Activated CD4-positive, alpha-beta T cell treated with anti-CD3 and anti-CD28 coated beads, Interleukin-2, amount 10 ng/mL, durations not matched to agents 24 days and 14 days (primary cell): ENCODE measurements at regions of chr2 and their contacts with region 1.

Region 1: DNA sequence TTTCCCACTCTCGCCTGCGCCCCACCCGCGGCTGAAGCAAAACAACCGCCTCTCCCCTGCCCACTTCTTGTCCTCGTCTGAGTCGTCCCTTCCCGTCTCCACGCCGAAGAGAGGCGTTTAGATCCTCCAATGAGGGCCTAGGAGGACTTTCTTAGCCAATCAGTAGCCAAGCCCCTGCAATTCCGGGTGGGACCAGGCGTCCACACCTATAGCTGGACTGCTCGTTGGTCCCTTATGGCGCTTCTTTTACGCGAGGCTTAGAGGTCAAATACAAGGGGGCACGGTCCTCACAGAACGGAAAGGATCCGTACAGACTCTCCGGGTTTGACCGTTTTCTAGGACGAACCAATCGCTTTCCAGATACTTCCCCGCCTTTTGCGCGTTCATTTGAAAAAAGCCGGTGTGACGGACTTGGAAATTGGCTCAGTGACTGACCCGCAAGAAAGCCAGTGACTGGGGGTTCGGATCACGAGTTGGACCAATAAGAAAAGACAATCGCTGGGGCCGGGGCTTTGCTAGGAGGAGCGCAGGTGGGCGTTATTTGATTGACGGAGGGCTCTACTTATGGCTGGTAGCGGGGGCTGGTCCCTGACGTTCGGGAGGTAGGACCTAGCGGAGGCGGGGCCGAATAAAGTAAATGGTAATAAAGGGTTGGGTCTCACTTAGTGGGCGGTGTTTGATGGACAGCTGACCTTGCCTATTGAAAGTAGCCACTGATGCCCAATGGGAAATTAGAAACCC is 565 bp upstream of the PPM1B start:
- DNase-seq: peak; percentile 98
- H3K4me3 Mint-ChIP-seq: peak overlapping the region; percentile 94
- H3K27ac Mint-ChIP-seq: peak overlapping the region; percentile 99
- H3K4me1 Mint-ChIP-seq: peaks cover 27% of the 10 kb centered on the region
- H3K27me3 Mint-ChIP-seq: no peaks in the 10 kb centered on the region

Region 2: DNA sequence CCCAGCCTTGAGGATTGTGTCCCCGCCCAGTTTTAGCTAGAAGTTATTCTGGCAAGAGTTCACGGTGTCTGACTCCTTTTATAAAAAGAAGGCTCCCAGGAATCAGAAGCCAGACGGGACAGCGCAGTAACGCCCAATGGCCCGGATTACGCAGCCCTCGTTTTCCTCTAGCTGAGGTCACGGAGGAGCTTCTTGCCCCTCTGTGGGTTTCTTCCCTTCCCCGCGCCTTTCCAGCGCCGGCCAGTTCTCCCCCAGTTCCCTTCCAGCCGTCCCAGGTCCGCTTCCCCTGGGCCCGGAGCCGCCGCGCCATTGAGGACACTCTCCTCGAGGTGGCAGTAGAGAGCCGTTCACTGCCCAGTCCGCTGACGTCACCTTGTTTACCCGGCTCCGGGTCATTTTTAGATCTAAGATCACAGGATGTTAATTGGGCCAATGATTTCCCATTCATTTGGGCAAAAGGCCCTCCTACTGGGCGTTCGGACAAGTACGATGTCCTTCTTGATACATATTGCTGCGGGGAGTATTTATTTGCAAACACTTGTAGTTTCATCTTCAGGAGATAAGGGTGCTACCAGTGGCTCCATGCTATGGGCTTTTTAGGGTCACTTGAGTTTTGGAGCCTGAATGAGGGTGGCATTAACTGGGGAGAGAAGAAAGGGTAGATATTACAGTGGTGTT is 80.9 kb before region 1 on chr2:
- intact Hi-C with region 1: loop called (anchors 1 kb)
- DNase-seq: peak; percentile 96
- H3K4me3 Mint-ChIP-seq: peak overlapping the region; percentile 72
- H3K27ac Mint-ChIP-seq: peak overlapping the region; percentile 83
- H3K4me1 Mint-ChIP-seq: peaks cover 20% of the 10 kb centered on the region
- H3K27me3 Mint-ChIP-seq: no peaks in the 10 kb centered on the region

Region 3: GRCh38 chr2:44100351-44100750 is 67.8 kb before region 1 on chr2:
- intact Hi-C with region 1: no loop called
- DNase-seq: peak; percentile 63
- H3K4me3 Mint-ChIP-seq: no peak overlapping the region
- H3K27ac Mint-ChIP-seq: no peak overlapping the region
- H3K4me1 Mint-ChIP-seq: peaks cover 13% of the 10 kb centered on the region
- H3K27me3 Mint-ChIP-seq: no peaks in the 10 kb centered on the region

Region 4: GRCh38 chr2:44155666-44156446 is 12.3 kb before region 1 on chr2:
- intact Hi-C with region 1: no loop called
- DNase-seq: no peak
- H3K4me3 Mint-ChIP-seq: no peak overlapping the region
- H3K27ac Mint-ChIP-seq: no peak overlapping the region
- H3K4me1 Mint-ChIP-seq: no peaks in the 10 kb centered on the region
- H3K27me3 Mint-ChIP-seq: peaks cover 2% of the 10 kb centered on the region

Region 5: GRCh38 chr2:44181648-44182047 is 13.5 kb after region 1 on chr2:
- intact Hi-C with region 1: no loop called
- DNase-seq: no peak
- H3K4me3 Mint-ChIP-seq: no peak overlapping the region
- H3K27ac Mint-ChIP-seq: no peak overlapping the region
- H3K4me1 Mint-ChIP-seq: peaks cover 39% of the 10 kb centered on the region
- H3K27me3 Mint-ChIP-seq: no peaks in the 10 kb centered on the region

Region 6: GRCh38 chr2:44191739-44192138 is 23.6 kb after region 1 on chr2:
- intact Hi-C with region 1: loop called (anchors 1 kb)
- DNase-seq: no peak
- H3K4me3 Mint-ChIP-seq: peak overlapping the region; percentile 25
- H3K27ac Mint-ChIP-seq: peak overlapping the region; percentile 67
- H3K4me1 Mint-ChIP-seq: peaks cover 32% of the 10 kb centered on the region
- H3K27me3 Mint-ChIP-seq: no peaks in the 10 kb centered on the region

Region 7: GRCh38 chr2:44237221-44237620 is 69.1 kb after region 1 on chr2:
- intact Hi-C with region 1: loop called (anchors 5 kb)
- DNase-seq: peak; percentile 81
- H3K4me3 Mint-ChIP-seq: peak overlapping the region; percentile 27
- H3K27ac Mint-ChIP-seq: no peak overlapping the region
- H3K4me1 Mint-ChIP-seq: peaks cover 14% of the 10 kb centered on the region
- H3K27me3 Mint-ChIP-seq: no peaks in the 10 kb centered on the region

Region 8: GRCh38 chr2:44247924-44248323 is 79.8 kb after region 1 on chr2:
- intact Hi-C with region 1: no loop called
- DNase-seq: no peak
- H3K4me3 Mint-ChIP-seq: no peak overlapping the region
- H3K27ac Mint-ChIP-seq: no peak overlapping the region
- H3K4me1 Mint-ChIP-seq: peaks cover 7% of the 10 kb centered on the region
- H3K27me3 Mint-ChIP-seq: peaks cover 5% of the 10 kb centered on the region